A673 (cell line): ENCODE measurements at regions of chr12 and their contacts with region 1.

Region 1: GRCh38 chr12:108803428-108804105 is 53.8 kb downstream of the SSH1 start:
- DNase-seq: peak; percentile 88
- H3K4me3 ChIP-seq: no peak overlapping the region
- H3K27ac ChIP-seq: peak overlapping the region; percentile 37
- H3K4me1 ChIP-seq: peaks cover 25% of the 10 kb centered on the region
- H3K27me3 ChIP-seq: no peaks in the 10 kb centered on the region
- CTCF ChIP-seq: peak; percentile 96

Region 2: DNA sequence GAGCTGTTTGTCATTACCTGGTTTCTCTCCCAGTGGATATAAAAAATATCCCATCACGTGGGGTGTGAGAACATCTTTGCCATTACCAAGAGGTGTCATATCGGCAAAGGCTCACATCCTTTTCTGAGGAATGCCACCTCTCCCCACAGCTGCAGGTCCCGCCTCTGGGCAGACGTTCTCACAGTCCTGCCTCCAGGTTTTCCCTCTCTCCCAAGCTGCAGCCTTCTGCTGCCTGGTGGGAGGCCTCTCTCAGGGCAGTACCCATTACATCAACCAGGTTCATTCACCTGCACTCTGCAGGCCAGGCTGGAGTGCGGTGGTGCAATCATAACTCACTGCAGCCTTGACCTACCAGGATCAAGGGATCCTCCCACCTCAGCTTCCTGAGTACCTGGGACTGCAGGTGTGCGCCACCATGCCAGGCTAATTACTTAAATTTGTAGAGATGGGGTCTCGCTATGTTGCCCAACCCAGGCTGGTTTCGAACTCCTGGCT is 190.7 kb before region 1 on chr12:
- CTCF ChIA-PET with region 1: no interaction called
- POLR2A ChIA-PET with region 1: no interaction called
- intact Hi-C with region 1: loop called (anchors 1 kb)
- DNase-seq: no peak
- H3K4me3 ChIP-seq: no peak overlapping the region
- H3K27ac ChIP-seq: no peak overlapping the region
- H3K4me1 ChIP-seq: peaks cover 15% of the 10 kb centered on the region
- H3K27me3 ChIP-seq: no peaks in the 10 kb centered on the region
- CTCF ChIP-seq: no peak

Region 3: GRCh38 chr12:108855284-108856169 is 52.0 kb after region 1 on chr12:
- CTCF ChIA-PET with region 1: no interaction called
- POLR2A ChIA-PET with region 1: no interaction called
- intact Hi-C with region 1: no loop called
- DNase-seq: no peak
- H3K4me3 ChIP-seq: peak overlapping the region; percentile 85
- H3K27ac ChIP-seq: peak overlapping the region; percentile 89
- H3K4me1 ChIP-seq: peaks cover 43% of the 10 kb centered on the region
- H3K27me3 ChIP-seq: no peaks in the 10 kb centered on the region
- CTCF ChIP-seq: no peak

Region 4: DNA sequence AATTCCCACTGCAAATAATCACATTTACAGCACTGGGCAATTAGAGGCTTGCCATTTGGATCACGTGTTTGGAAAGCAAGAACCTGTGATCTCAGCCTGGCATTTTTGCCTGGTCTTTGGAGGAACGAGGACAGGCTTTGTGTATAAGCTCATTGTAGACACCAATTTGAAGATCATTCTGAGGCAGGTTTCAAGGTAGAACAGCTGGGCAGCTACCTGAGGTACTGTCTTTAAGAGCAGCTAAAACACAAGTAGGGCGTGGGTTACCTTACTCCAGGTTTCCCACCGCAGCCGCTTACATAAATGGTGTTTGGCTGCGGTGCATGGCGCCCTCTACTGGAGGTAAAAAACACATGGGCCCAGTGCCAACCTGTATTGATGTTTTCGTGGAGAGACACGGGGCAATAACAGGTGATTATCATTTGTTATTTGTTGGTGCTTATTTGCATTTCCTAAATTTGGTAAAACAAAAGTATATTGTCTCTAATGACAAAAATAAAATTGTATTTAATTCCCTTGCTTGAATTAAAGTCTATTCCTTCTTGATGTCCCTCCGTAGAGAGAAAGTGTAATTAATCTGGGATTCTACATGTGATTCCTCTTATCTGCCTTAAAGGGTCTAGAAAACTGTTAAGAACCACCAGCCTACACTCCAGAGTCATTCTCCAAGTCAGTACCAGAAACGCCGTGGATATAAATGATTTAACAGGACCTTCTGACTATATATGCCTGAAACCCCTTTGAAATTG is 147.6 kb after region 1 on chr12:
- CTCF ChIA-PET with region 1: no interaction called
- POLR2A ChIA-PET with region 1: no interaction called
- intact Hi-C with region 1: loop called (anchors 5 kb)
- DNase-seq: peak; percentile 73
- H3K4me3 ChIP-seq: peak overlapping the region; percentile 12
- H3K27ac ChIP-seq: no peak overlapping the region
- H3K4me1 ChIP-seq: peaks cover 7% of the 10 kb centered on the region
- H3K27me3 ChIP-seq: no peaks in the 10 kb centered on the region
- CTCF ChIP-seq: peak; percentile 91